Thyroid gland (tissue), 4 donors: ENCODE measurements at regions of chr14 and their contacts with region 1.

Region 1: GRCh38 chr14:34722717-34723545 is 8.5 kb upstream of the CFL2 start:
- DNase-seq: peak; percentile 26 to 34
- H3K4me3 ChIP-seq: no peak overlapping the region
- H3K27ac ChIP-seq: no peak overlapping the region
- H3K4me1 ChIP-seq: no peaks in the 10 kb centered on the region
- H3K27me3 ChIP-seq: no peaks in the 10 kb centered on the region
- CTCF ChIP-seq: peak; percentile 68 to 81 (median 74)
- POLR2A ChIP-seq: no peak

Region 2: DNA sequence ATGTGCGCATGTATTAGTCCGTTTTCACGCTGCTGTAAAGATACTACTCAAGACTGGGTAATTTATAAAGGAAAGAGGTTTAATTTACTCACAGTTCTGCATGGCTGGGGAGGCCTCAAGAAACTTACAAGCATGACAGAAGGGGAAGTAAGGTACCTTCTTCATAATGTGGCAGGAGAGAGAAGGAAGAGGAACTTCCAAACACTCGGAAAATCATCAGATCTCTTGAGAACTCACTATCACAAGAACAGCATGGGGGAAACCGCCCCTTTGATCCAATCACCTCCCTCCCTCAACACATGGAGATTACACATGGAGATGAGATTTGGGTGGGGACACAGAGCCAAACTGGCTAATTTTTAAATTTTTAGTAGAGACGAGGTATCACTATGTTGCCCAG is 51.2 kb before region 1 on chr14:
- intact Hi-C with region 1: loop called (anchors 2 kb)
- DNase-seq: no peak
- H3K4me3 ChIP-seq: no peak overlapping the region
- H3K27ac ChIP-seq: no peak overlapping the region
- H3K4me1 ChIP-seq: no peaks in the 10 kb centered on the region
- H3K27me3 ChIP-seq: no peaks in the 10 kb centered on the region
- CTCF ChIP-seq: no peak
- POLR2A ChIP-seq: no peak